Naive thymus-derived CD4-positive, alpha-beta T cell (primary cell): ENCODE measurements at regions of chr22 and their contacts with region 1.

Region 1: GRCh38 chr22:41800348-41801146 is at the start of gene CCDC134:
- DNase-seq: peak; percentile 87 to 94 (median 92)
- ATAC-seq: peak; percentile 99
- H3K4me3 ChIP-seq: peak within 1 kb of the TSS; percentile 88
- H3K4me3 Mint-ChIP-seq: peak within 1 kb of the TSS; percentile 81 to 97 (median 95)
- H3K27ac ChIP-seq: peak within 1 kb of the TSS; percentile 88
- H3K27ac Mint-ChIP-seq: peak within 1 kb of the TSS; percentile 94 to 100 (median 98)
- H3K4me1 ChIP-seq: peaks cover 17 to 19% of the 10 kb centered on the region in 2 donors
- H3K4me1 Mint-ChIP-seq: peaks cover 8 to 49% (median 41%) of the 10 kb centered on the region in 7 donors
- H3K27me3 ChIP-seq: no peaks in the 10 kb centered on the region
- H3K27me3 Mint-ChIP-seq: no peaks in the 10 kb centered on the region
- total RNA-seq, gene CCDC134: 13.7 to 22.8 (median 18.2) TPM

Region 2: GRCh38 chr22:41666661-41667258 is 133.8 kb before region 1 on chr22:
- CTCF ChIA-PET with region 1: no interaction called
- POLR2A ChIA-PET with region 1: no interaction called
- intact Hi-C with region 1: loop called in 1 of 2 experiments (anchors 1 kb)
- DNase-seq: peak; percentile 88 to 97 (median 95)
- ATAC-seq: peak; percentile 98
- H3K4me3 ChIP-seq: peak overlapping the region; percentile 44
- H3K4me3 Mint-ChIP-seq: peak overlapping the region; percentile 75 to 87 (median 82)
- H3K27ac ChIP-seq: peak overlapping the region; percentile 72
- H3K27ac Mint-ChIP-seq: peak overlapping the region; percentile 91 to 99 (median 97)
- H3K4me1 ChIP-seq: peaks cover 7% of the 10 kb centered on the region in 2 donors
- H3K4me1 Mint-ChIP-seq: peaks cover 0 to 25% (median 10%) of the 10 kb centered on the region in 7 donors
- H3K27me3 ChIP-seq: no peaks in the 10 kb centered on the region
- H3K27me3 Mint-ChIP-seq: no peaks in the 10 kb centered on the region

Region 3: DNA sequence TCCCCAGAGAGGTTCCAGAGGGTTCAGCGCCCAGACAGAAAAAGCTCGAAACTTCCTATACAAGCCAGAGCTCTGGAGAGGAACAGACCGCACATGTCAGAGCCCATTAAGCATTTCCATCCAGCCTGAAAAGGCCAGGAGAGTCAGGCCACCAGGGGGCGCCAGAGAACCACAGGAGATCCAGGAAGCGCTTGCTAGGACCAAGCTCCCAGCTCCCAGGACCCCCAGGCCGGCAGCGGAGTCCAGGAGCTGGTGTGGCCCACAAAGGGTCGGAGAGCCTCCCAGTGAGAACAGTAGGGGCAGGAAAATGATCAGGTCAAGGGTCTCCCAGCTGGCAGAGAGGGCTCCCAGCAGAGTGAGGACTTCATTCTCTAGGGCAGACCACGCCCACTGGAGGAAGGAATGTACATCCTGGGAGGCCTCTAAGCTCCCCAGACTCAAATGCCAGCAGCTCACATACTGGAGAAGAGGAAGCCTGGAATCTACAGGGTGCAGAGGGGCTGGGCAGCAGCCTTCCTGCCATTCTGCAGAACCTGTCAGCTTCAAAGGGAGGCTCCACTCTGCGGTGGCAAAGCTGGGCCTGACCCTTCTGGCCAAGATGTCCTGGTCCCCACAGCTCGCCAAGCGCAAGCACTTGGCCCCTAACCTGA is 103.3 kb before region 1 on chr22:
- CTCF ChIA-PET with region 1: interaction called, 9 read pairs
- POLR2A ChIA-PET with region 1: interaction called, 14 read pairs
- intact Hi-C with region 1: loop called in 1 of 2 experiments (anchors 1 kb)
- DNase-seq: peak; percentile 73 to 94 (median 84)
- ATAC-seq: peak; percentile 91
- H3K4me3 ChIP-seq: peak overlapping the region; percentile 44
- H3K4me3 Mint-ChIP-seq: peak overlapping the region; percentile 44 to 80 (median 68)
- H3K27ac ChIP-seq: peak overlapping the region; percentile 5
- H3K27ac Mint-ChIP-seq: peak overlapping the region; percentile 16 to 90 (median 85)
- H3K4me1 ChIP-seq: peaks cover 7 to 10% of the 10 kb centered on the region in 2 donors
- H3K4me1 Mint-ChIP-seq: peaks cover 10 to 16% (median 13%) of the 10 kb centered on the region in 7 donors
- H3K27me3 ChIP-seq: no peaks in the 10 kb centered on the region
- H3K27me3 Mint-ChIP-seq: peaks cover 0 to 3% (median 0%) of the 10 kb centered on the region in 5 donors

Region 4: GRCh38 chr22:41762980-41763779 is 37.4 kb before region 1 on chr22:
- CTCF ChIA-PET with region 1: no interaction called
- POLR2A ChIA-PET with region 1: interaction called, 4 read pairs
- intact Hi-C with region 1: loop called in 1 of 2 experiments (anchors 5 kb)
- DNase-seq: peak in 5 of 9 donors; percentile 13 to 32 (median 21)
- ATAC-seq: peak; percentile 60
- H3K4me3 ChIP-seq: no peak overlapping the region
- H3K4me3 Mint-ChIP-seq: no peak overlapping the region
- H3K27ac ChIP-seq: no peak overlapping the region
- H3K27ac Mint-ChIP-seq: no peak overlapping the region
- H3K4me1 ChIP-seq: no peaks in the 10 kb centered on the region
- H3K4me1 Mint-ChIP-seq: peaks cover 0 to 5% (median 0%) of the 10 kb centered on the region in 7 donors
- H3K27me3 ChIP-seq: no peaks in the 10 kb centered on the region
- H3K27me3 Mint-ChIP-seq: peaks cover 0 to 8% (median 0%) of the 10 kb centered on the region in 5 donors

Region 5: GRCh38 chr22:41786418-41786817 is 14.1 kb before region 1 on chr22:
- CTCF ChIA-PET with region 1: interaction called, 21 read pairs
- POLR2A ChIA-PET with region 1: interaction called, 366 read pairs
- intact Hi-C with region 1: loop called (anchors 1 kb)
- DNase-seq: no peak
- ATAC-seq: no peak
- H3K4me3 ChIP-seq: no peak overlapping the region
- H3K4me3 Mint-ChIP-seq: no peak overlapping the region
- H3K27ac ChIP-seq: no peak overlapping the region
- H3K27ac Mint-ChIP-seq: peak overlapping the region in 2 of 9 donors; percentile 60 to 70
- H3K4me1 ChIP-seq: peaks cover 13 to 16% of the 10 kb centered on the region in 2 donors
- H3K4me1 Mint-ChIP-seq: peaks cover 16 to 47% (median 37%) of the 10 kb centered on the region in 7 donors
- H3K27me3 ChIP-seq: no peaks in the 10 kb centered on the region
- H3K27me3 Mint-ChIP-seq: no peaks in the 10 kb centered on the region

Region 6: GRCh38 chr22:41857155-41857859 is 56.8 kb after region 1 on chr22:
- CTCF ChIA-PET with region 1: no interaction called
- POLR2A ChIA-PET with region 1: interaction called, 11 read pairs
- intact Hi-C with region 1: no loop called
- DNase-seq: peak; percentile 27 to 76 (median 65)
- ATAC-seq: peak; percentile 87
- H3K4me3 ChIP-seq: no peak overlapping the region
- H3K4me3 Mint-ChIP-seq: peak overlapping the region; percentile 3 to 67 (median 36)
- H3K27ac ChIP-seq: no peak overlapping the region
- H3K27ac Mint-ChIP-seq: peak overlapping the region; percentile 62 to 91 (median 82)
- H3K4me1 ChIP-seq: peaks cover 17 to 26% of the 10 kb centered on the region in 2 donors
- H3K4me1 Mint-ChIP-seq: peaks cover 33 to 69% (median 54%) of the 10 kb centered on the region in 7 donors
- H3K27me3 ChIP-seq: no peaks in the 10 kb centered on the region
- H3K27me3 Mint-ChIP-seq: no peaks in the 10 kb centered on the region